HepG2 (cell line): ENCODE measurements at regions of chr22 and their contacts with region 1.

Region 1: DNA sequence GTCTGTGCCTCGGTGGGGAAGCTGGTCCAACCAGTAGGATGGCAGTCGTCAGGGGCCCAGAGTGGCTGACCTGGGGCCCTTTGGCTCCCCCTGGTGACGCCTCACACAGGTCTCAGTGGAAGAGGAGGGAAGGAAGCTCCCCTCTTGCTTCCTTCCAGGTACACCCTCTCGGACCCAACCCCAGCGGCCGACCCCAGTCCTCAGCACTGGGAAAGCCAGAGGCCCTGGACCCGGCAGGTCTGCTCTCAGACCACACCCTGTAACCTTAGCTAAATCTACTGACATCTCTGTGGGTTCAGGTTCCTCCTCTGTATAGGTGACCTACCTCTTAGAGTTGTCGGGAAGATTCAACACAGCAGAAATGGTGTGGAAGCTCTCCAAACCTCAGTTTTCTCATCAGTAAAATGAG is 3.4 kb upstream of the SCUBE1 start:
- DNase-seq: peak; percentile 30
- ATAC-seq: peak; percentile 81
- H3K4me3 ChIP-seq: no peak overlapping the region
- H3K27ac ChIP-seq: no peak overlapping the region
- H3K4me1 ChIP-seq: peaks cover 26% of the 10 kb centered on the region
- H3K27me3 ChIP-seq: peaks cover 4 to 21% of the 10 kb centered on the region in 2 experiments
- CTCF ChIP-seq: peak; percentile 83
- EP300 ChIP-seq: no peak
- POLR2A ChIP-seq: no peak
- RAD21 ChIP-seq: peak; percentile 67; the same call in 1 of the 2 replicates

Region 2: GRCh38 chr22:43159484-43160178 is 186.9 kb before region 1 on chr22:
- CTCF ChIA-PET with region 1: no interaction called
- POLR2A ChIA-PET with region 1: no interaction called
- in situ Hi-C with region 1: no loop called
- intact Hi-C with region 1: no loop called
- DNase-seq: no peak
- ATAC-seq: peak; percentile 32
- H3K4me3 ChIP-seq: no peak overlapping the region
- H3K27ac ChIP-seq: no peak overlapping the region
- H3K4me1 ChIP-seq: peaks cover 26% of the 10 kb centered on the region
- H3K27me3 ChIP-seq: peaks cover 8 to 22% of the 10 kb centered on the region in 2 experiments; a peak in 4 of 5 replicates
- CTCF ChIP-seq: peak; percentile 59
- EP300 ChIP-seq: no peak
- POLR2A ChIP-seq: no peak
- RAD21 ChIP-seq: no peak

Region 3: DNA sequence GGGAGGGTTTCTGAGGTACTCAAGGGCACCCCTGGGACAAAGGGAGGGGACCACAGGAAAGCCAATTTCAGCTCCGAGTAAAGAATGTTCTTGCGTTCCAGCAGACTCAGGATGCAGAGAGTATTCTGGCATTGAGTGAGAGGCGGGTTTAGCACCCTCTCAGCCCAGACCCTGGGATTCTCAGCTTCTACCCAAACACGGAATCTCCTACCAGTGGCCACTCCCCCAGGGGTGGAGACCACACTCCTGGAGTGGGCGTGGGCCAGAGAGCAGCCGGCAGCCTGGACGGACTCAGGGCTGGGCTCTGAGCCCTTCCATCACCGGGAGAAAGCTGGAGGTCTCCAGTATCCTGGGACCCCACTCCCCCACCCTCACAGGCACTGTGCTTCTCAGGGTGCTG is 133.5 kb before region 1 on chr22:
- CTCF ChIA-PET with region 1: no interaction called
- POLR2A ChIA-PET with region 1: no interaction called
- in situ Hi-C with region 1: no loop called
- intact Hi-C with region 1: no loop called
- DNase-seq: no peak
- ATAC-seq: peak; percentile 17; the same call in 1 of the 3 replicates
- H3K4me3 ChIP-seq: no peak overlapping the region
- H3K27ac ChIP-seq: no peak overlapping the region
- H3K4me1 ChIP-seq: no peaks in the 10 kb centered on the region
- H3K27me3 ChIP-seq: peaks cover 15 to 51% of the 10 kb centered on the region in 2 experiments; a peak in 4 of 5 replicates
- CTCF ChIP-seq: no peak
- EP300 ChIP-seq: no peak
- POLR2A ChIP-seq: no peak
- RAD21 ChIP-seq: no peak

Region 4: DNA sequence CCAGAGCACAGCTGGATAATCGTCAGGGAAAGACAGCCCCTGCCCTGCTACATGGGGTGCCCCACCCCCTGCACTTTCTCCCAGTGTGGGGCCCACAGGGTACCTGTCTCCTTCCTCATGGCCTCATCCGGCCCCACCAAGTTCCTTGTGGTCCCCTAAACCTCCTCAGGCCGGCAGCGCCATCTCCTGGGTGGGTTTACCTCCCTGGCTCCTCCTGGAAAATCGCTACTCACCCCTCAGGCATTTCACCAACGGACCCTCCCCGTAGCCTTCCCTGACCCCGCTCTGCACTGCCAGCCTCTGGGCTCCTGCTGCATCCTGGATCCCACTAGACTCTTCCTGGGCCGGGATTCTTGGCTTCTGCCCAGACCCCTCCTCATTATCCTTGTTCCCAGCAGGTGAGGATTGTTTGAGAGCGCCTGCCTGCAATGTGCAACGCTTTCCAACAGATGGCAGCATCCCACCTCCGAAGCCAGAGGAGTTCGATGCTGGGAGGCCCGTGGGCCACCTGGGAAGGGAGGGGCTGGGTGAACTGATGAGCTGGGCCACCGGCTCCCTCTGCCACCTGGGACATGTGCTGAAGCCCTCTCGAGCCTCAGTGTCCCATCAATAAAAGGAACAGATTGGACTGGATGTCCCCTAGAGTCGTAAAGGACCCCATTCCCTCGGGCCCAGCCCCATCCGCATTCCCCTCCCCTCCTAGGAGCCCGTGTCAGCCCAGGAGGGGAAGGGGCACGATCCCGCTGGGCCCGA is 115.4 kb before region 1 on chr22:
- CTCF ChIA-PET with region 1: interaction called, 21 read pairs
- POLR2A ChIA-PET with region 1: no interaction called
- in situ Hi-C with region 1: loop called (anchors 10 kb)
- intact Hi-C with region 1: loop called (anchors 5 kb)
- DNase-seq: peak; percentile 48
- ATAC-seq: peak; percentile 61
- H3K4me3 ChIP-seq: no peak overlapping the region
- H3K27ac ChIP-seq: no peak overlapping the region
- H3K4me1 ChIP-seq: peaks cover 40% of the 10 kb centered on the region
- H3K27me3 ChIP-seq: peaks cover 5 to 50% of the 10 kb centered on the region in 2 experiments
- CTCF ChIP-seq: peak; percentile 97
- EP300 ChIP-seq: no peak
- POLR2A ChIP-seq: no peak
- RAD21 ChIP-seq: peak; percentile 91

Region 5: GRCh38 chr22:43273902-43274484 is 72.5 kb before region 1 on chr22:
- CTCF ChIA-PET with region 1: interaction called, 32 read pairs
- POLR2A ChIA-PET with region 1: no interaction called
- in situ Hi-C with region 1: loop called (anchors 5 kb)
- intact Hi-C with region 1: loop called (anchors 1 kb)
- DNase-seq: peak; percentile 47
- ATAC-seq: peak; percentile 58
- H3K4me3 ChIP-seq: no peak overlapping the region
- H3K27ac ChIP-seq: no peak overlapping the region
- H3K4me1 ChIP-seq: peaks cover 8% of the 10 kb centered on the region
- H3K27me3 ChIP-seq: peaks cover 11 to 46% of the 10 kb centered on the region in 2 experiments
- CTCF ChIP-seq: peak; percentile 89
- EP300 ChIP-seq: no peak
- POLR2A ChIP-seq: no peak
- RAD21 ChIP-seq: peak; percentile 73

Region 6: GRCh38 chr22:43363315-43364168 is 17.0 kb after region 1 on chr22:
- CTCF ChIA-PET with region 1: no interaction called
- POLR2A ChIA-PET with region 1: no interaction called
- in situ Hi-C with region 1: no loop called
- intact Hi-C with region 1: no loop called
- DNase-seq: no peak
- ATAC-seq: no peak
- H3K4me3 ChIP-seq: no peak overlapping the region
- H3K27ac ChIP-seq: no peak overlapping the region
- H3K4me1 ChIP-seq: no peaks in the 10 kb centered on the region
- H3K27me3 ChIP-seq: 0 out of 5 replicates have a peak, but pooled peaks cover 0 to 6% of the 10 kb centered on the region in 2 experiments
- CTCF ChIP-seq: no peak
- EP300 ChIP-seq: no peak
- POLR2A ChIP-seq: no peak
- RAD21 ChIP-seq: no peak

Region 7: DNA sequence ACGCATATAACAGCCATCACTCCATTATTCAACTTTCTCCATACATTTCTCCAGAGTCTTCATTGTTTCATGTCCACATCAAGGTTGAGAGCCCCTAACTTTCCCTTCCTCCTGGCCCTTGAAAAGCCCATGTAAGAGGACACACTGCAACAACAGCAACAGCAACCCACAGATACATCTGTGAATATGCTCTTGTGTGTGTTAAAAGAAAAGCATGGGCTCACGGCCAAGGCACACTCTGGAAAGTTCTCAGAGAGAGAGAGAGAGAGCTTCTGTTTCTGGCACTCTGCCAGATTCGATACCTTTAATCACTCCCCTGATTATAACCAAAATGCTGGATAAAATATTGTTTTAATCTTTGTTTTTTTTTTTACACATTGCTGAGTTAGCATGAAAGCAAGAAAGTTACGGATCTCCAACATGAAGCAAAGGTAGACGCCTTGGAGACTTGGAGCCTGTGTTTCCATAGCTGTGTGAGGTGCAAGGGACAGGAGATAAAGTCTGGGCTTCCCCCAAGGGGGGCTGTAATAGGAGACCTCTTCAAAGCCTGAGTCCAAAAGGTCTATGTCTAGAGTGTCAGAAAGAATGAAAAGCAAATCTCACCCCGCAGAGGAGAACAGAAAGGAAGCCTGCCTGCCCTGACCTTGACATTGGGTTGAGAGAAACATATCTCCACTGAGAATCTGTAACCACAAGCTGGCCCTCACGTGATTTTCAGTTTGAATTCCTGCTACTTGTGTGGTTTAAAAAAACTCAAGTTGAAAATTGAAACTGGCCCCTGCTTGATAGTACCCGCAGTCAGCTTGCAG is 31.6 kb after region 1 on chr22:
- CTCF ChIA-PET with region 1: no interaction called
- POLR2A ChIA-PET with region 1: no interaction called
- in situ Hi-C with region 1: no loop called
- intact Hi-C with region 1: no loop called
- DNase-seq: peak; percentile 97
- ATAC-seq: peak; percentile 90
- H3K4me3 ChIP-seq: peak overlapping the region in 2 of 3 experiments; percentile 11 to 14; a peak in 2 of 6 replicates
- H3K27ac ChIP-seq: peak overlapping the region; percentile 35
- H3K4me1 ChIP-seq: peaks cover 54% of the 10 kb centered on the region
- H3K27me3 ChIP-seq: no peaks in the 10 kb centered on the region
- CTCF ChIP-seq: no peak
- EP300 ChIP-seq: peak in 1 of 2 experiments; percentile 84; a peak in 2 of 4 replicates
- POLR2A ChIP-seq: no peak
- RAD21 ChIP-seq: no peak